ENCODE measurements at regions of chr5 and their contacts with region 1.

Region 1: GRCh38 chr5:14364576-14365472 is 216.8 kb upstream of the OTULINL start:
- DNase-seq: no peak
- ATAC-seq: no peak
- H3K4me3 Mint-ChIP-seq: no peak overlapping the region
- H3K27ac Mint-ChIP-seq: peak overlapping the region; percentile 75
- H3K4me1 Mint-ChIP-seq: peaks cover 58% of the 10 kb centered on the region
- H3K27me3 Mint-ChIP-seq: peaks cover 5% of the 10 kb centered on the region

Region 2: DNA sequence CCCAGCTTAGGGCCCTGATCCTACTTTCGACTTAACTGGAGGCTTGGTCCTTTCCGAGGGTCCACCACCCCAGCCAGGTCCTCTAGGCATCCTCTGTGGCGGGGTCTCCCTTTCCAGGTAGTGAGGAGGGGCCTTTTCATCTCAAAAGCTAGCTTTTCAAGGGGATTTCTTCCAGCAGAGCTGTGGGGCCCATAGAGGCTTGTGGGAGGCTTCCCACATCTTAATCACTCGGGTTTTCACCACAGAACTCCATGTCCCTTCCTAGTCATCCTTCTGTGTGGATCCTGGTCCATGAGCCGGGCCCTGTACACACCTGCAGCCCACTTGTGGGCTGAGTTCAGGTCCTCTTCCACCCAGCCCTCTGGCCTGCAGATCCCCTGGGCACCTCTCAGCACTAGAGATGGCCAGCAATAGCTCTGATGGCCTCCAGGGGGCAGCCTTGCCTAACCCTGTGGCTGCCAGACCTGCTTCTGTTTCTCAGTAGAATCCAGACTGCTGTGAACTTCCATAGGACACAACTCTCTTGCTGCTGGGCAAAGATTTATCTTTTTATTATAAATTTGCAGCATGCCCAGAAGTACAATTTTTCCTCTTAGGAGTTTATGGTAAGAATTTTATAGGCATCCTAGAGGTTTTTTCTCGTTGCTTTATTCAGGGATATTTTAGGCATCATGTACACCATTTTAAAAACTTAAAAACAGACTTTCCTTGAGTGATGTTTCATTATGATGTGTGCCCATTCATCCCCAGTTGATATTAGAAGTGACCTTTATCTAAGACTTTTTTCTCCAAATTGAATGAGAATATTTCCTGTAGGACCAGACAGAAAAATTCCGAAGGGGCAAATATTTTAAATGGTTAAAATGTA is 12.7 kb before region 1 on chr5:
- CTCF ChIA-PET with region 1: interaction called, 13 read pairs
- DNase-seq: peak; percentile 73
- ATAC-seq: peak; percentile 93
- H3K4me3 Mint-ChIP-seq: no peak overlapping the region
- H3K27ac Mint-ChIP-seq: no peak overlapping the region
- H3K4me1 Mint-ChIP-seq: peaks cover 12% of the 10 kb centered on the region
- H3K27me3 Mint-ChIP-seq: peaks cover 4% of the 10 kb centered on the region

Region 3: DNA sequence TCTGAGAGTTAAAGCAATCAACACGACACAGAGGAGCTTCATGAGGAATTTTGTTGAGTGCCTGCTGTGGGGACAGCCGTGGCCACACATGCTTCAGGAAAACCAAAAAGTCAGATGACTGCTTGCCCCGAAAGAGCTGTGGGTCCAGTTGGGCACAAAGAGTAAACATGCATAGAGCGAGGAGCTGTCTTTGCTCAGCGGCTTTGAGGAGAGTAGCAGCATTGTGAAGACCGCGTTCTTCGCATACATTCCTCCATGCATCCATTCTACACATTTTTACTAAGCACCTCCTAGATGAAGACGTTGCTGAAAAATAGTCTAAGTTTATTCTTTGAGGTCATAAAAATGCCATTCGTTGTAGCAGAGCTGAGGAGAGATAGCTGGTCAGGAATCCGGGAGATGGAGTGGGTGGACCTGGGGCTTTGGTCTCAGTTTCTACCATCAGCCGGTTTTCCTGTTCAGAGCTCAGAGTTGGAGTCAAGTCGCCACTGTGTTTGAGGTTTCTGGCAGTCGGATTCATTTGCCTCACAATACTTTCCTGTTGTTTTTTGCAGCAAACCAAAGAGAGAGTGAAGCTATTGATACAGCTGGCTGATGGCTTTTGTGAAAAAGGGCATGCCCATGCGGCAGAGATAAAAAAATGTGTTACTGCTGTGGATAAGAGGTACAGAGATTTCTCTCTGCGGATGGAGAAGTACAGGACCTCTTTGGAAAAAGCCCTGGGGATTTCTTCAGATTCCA is 22.2 kb after region 1 on chr5:
- CTCF ChIA-PET with region 1: interaction called, 10 read pairs
- DNase-seq: no peak
- ATAC-seq: no peak
- H3K4me3 Mint-ChIP-seq: no peak overlapping the region
- H3K27ac Mint-ChIP-seq: no peak overlapping the region
- H3K4me1 Mint-ChIP-seq: peaks cover 11% of the 10 kb centered on the region
- H3K27me3 Mint-ChIP-seq: peaks cover 26% of the 10 kb centered on the region

Region 4: GRCh38 chr5:14399054-14399692 is 34.3 kb after region 1 on chr5:
- CTCF ChIA-PET with region 1: interaction called, 32 read pairs
- DNase-seq: no peak
- ATAC-seq: peak; percentile 73
- H3K4me3 Mint-ChIP-seq: no peak overlapping the region
- H3K27ac Mint-ChIP-seq: no peak overlapping the region
- H3K4me1 Mint-ChIP-seq: peaks cover 38% of the 10 kb centered on the region
- H3K27me3 Mint-ChIP-seq: peaks cover 12% of the 10 kb centered on the region

Region 5: DNA sequence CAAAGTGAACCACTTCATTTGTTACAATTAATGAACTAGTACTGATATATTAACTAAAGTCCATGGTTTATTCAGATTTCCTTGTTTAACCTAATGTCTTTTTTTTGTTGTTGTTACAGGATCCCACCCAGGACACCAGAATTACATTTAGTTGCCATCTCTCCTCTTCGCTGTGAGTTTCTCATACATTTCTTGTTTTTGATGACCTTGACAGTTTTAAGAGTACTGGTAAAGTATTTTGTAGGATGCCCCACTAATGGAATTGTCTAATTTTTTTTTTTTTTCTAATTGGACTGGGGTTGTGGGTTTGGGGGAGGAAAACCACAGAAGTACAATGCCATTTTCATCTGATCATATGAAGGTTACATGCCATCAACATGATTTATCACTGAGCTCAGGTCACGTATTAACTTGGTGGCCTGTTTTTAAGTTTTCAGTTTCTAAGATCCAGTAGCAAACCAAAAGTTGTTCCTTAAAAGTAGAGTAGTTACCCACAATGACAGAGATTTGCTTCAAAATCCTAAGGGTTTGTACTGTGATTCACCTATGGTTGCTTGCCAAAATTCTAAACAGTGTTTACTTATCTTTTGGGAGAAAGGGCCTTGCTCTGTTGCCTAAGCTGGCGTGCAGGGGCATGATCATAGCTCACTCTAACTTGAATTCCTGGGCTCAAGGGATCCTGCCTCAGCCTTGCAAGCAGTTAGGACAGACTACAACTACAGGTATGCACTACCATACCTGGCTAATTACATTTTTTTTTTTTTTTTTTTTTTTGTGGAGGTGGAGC is 295.2 kb after region 1 on chr5:
- CTCF ChIA-PET with region 1: interaction called, 16 read pairs
- DNase-seq: no peak
- ATAC-seq: no peak
- H3K4me3 Mint-ChIP-seq: no peak overlapping the region
- H3K27ac Mint-ChIP-seq: no peak overlapping the region
- H3K4me1 Mint-ChIP-seq: peaks cover 40% of the 10 kb centered on the region
- H3K27me3 Mint-ChIP-seq: no peaks in the 10 kb centered on the region

Region 6: GRCh38 chr5:14665949-14666348 is 301.1 kb after region 1 on chr5:
- CTCF ChIA-PET with region 1: interaction called, 12 read pairs
- DNase-seq: peak; percentile 78
- ATAC-seq: peak; percentile 31
- H3K4me3 Mint-ChIP-seq: peak overlapping the region; percentile 96
- H3K27ac Mint-ChIP-seq: peak overlapping the region; percentile 94
- H3K4me1 Mint-ChIP-seq: peaks cover 66% of the 10 kb centered on the region
- H3K27me3 Mint-ChIP-seq: no peaks in the 10 kb centered on the region

Measured in activated CD8-positive, alpha-beta memory T cell treated with anti-CD3 and anti-CD28 coated beads, Interleukin-2, amount 10 ng/mL, durations not matched to agents 7 days and 5 days (primary cell).